GM18951 (cell line): ENCODE measurements at regions of chr22 and their contacts with region 1.

Region 1: DNA sequence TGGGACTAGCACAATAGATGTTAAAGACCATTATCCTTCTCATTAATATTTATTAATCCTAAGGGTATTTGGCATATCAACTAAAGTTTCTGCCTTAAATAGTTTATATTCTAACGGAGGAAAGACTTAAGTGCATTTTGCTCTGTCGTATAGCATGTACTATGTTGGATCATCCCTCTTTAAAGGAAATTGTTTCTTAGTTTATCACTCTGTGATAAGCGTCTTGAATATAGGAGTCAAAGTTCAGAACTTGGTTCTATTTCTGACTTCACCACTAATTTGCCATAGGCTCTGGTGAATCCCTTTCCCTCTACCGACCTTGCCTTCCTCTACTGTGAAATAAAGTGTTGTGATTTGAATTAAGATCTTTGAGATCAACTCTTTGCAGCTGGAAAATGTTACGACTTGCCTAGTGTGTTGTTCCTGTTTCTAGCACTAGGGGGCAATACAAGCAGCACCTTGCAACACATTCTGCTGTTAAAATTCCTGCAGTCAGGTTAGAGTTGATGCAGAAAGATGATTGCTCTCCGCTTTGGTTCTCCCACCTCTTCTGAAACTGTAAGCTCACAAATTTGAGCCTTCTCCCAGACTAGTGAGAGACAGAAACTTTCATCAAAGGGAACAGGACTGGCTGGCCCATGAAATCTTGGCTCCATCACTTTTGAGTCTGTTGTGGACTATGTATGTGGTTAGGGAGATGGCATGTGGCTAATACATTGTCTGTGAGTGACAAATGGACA is 27.8 kb upstream of the ZNRF3 start:
- POLR2A ChIP-seq: no peak

Region 2: GRCh38 chr22:29040385-29041275 is 185.1 kb after region 1 on chr22:
- in situ Hi-C with region 1: loop called (anchors 5 kb)
- POLR2A ChIP-seq: no peak

Region 3: DNA sequence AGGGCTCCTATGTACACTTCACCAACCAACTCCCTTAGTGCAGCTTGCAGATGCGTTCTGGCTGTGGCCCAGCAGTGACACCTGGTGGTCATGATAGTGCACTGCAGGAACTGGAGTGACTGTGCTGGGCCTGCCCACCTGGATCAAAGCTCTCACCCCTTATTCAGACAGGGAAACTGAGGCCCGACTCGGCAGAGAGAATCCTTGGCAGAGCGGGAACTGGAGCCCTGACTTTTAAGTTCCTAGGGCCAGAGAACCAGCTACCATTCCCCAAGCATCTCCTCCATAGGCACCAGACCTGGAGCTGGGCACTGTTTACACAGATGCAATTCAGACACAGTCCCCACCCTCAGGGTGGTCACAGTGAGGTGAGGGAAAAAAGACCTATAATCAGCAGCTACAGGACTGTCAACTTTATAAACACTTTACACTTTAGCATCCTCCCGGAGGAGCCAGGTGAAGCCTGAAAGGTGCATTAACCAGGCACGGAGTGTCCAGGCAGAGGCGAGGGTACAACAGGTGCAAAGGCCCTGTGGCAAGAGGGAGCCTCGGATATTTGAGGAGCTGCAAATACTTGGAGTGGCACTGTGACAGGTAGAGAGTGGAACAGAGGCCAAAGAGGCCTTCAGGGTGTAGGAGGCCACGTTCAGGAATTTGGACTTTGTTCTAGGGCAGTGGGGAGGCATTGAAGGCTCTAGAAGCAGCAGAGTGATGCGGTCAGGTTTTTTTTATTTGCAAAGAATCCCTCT is 390.3 kb after region 1 on chr22:
- in situ Hi-C with region 1: loop called (anchors 25 kb)
- POLR2A ChIP-seq: no peak